WTC11 (cell line): ENCODE measurements at regions of chr3 and their contacts with region 1.

Region 1: DNA sequence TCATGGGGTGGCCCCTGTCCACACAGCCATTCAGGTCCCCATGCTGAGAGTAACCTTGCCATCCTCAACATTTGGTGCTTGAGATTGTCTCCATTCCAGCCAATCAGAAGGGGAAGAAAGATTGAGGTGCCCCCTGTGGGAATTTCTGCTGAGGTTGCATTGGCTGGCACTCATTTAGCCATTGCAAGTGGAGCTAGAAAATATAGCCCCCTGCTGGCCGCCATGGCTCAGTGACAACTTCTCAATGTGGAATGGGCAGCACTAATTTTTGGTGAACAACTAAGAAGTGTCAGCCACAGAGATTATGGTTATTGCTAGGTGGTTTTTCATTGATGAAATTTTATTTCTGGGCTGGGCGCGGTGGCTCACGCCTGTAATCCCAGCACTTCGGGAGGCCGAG is 22.0 kb downstream of the COL6A6 start:
- DNase-seq: peak; percentile 69
- ATAC-seq: peak; percentile 92
- H3K4me3 Mint-ChIP-seq: no peak overlapping the region
- H3K27ac Mint-ChIP-seq: no peak overlapping the region
- H3K4me1 Mint-ChIP-seq: no peaks in the 10 kb centered on the region
- H3K27me3 Mint-ChIP-seq: no peaks in the 10 kb centered on the region
- CTCF ChIP-seq: peak; percentile 75

Region 2: DNA sequence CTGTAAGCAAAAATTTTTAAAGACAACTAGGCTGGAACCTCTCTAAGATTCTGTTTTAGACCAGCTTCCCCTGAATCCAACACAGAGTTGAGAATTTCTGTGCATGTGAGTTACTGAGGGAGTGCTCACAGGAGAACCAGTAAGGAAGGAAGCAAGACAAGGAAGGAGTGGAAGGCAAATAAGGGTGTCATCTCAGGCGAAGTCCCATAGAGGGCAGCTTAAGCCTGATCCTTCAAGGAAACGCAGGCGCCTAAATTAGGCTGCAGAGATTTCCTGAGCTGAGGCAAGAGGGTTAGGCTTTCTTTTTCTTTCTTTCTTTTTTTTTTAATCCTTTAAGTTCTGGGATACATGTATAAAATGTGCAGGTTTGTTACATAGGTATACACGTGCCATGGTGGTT is 58.3 kb before region 1 on chr3:
- CTCF ChIA-PET with region 1: interaction called, 22 read pairs
- POLR2A ChIA-PET with region 1: no interaction called
- DNase-seq: peak; percentile 53
- ATAC-seq: peak; percentile 98
- H3K4me3 Mint-ChIP-seq: no peak overlapping the region
- H3K27ac Mint-ChIP-seq: no peak overlapping the region
- H3K4me1 Mint-ChIP-seq: no peaks in the 10 kb centered on the region
- H3K27me3 Mint-ChIP-seq: no peaks in the 10 kb centered on the region
- CTCF ChIP-seq: peak; percentile 36; the same call in 1 of the 2 replicates